ENCODE measurements at regions of chr10 and their contacts with region 1.

Region 1: GRCh38 chr10:123380497-123381085 is 226.4 kb downstream of the BUB3 start:
- DNase-seq: peak in 1 of 42 donors; percentile 32

Region 2: GRCh38 chr10:122703439-122704118 is 677.0 kb before region 1 on chr10:
- intact Hi-C with region 1: no loop called
- DNase-seq: peak; percentile 38 to 92 (median 82)

Region 3: DNA sequence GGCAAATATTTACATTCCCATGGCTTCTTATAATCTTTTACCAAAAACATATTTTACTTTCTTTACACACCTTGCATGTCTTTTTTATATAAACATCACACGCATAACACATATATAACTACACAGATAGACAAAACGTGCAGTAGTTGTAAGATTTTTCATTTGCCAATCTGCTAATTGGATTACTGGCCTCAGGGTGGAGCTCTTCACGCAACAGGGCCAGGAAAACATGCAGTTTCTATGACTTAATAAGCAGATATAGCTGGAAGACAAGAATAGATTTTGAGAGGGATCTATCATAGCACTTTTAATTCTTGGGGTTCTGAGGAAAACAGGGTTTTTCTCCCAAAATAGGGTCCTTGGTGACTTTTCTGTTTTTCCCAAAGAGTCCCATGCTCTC is 359.1 kb before region 1 on chr10:
- intact Hi-C with region 1: loop called (anchors 10 kb)
- DNase-seq: no peak

Region 4: GRCh38 chr10:123132576-123133477 is 247.8 kb before region 1 on chr10:
- intact Hi-C with region 1: loop called (anchors 5 kb)
- DNase-seq: peak; percentile 80 to 95 (median 88)

Region 5: GRCh38 chr10:123154092-123154921 is 226.3 kb before region 1 on chr10 and contains the start of gene BUB3:
- intact Hi-C with region 1: no loop called
- DNase-seq: peak; percentile 98 to 100 (median 99)

Region 6: GRCh38 chr10:123559066-123559822 is 178.7 kb after region 1 on chr10:
- intact Hi-C with region 1: loop called (anchors 5 kb)
- DNase-seq: peak; percentile 78 to 97 (median 92)